ENCODE measurements at regions of chr2 and their contacts with region 1.

Region 1: GRCh38 chr2:121530212-121530705 is 421 bp upstream of the RNU4ATAC start:
- DNase-seq: peak; percentile 75 to 87
- H3K4me3 ChIP-seq: peak overlapping the region; percentile 66 to 74
- H3K27ac ChIP-seq: peak overlapping the region; percentile 85 to 98
- H3K4me1 ChIP-seq: peaks cover 0 to 67% (median 37%) of the 10 kb centered on the region in 4 donors
- H3K27me3 ChIP-seq: no peaks in the 10 kb centered on the region
- CTCF ChIP-seq: no peak

Region 2: GRCh38 chr2:121649596-121650314 is 119.5 kb after region 1 on chr2:
- intact Hi-C with region 1: loop called (anchors 2 kb)
- DNase-seq: peak; percentile 96 to 98
- H3K4me3 ChIP-seq: peak overlapping the region; percentile 98
- H3K27ac ChIP-seq: peak overlapping the region; percentile 97
- H3K4me1 ChIP-seq: peaks cover 0 to 51% (median 36%) of the 10 kb centered on the region in 4 donors
- H3K27me3 ChIP-seq: no peaks in the 10 kb centered on the region
- CTCF ChIP-seq: no peak

Region 3: DNA sequence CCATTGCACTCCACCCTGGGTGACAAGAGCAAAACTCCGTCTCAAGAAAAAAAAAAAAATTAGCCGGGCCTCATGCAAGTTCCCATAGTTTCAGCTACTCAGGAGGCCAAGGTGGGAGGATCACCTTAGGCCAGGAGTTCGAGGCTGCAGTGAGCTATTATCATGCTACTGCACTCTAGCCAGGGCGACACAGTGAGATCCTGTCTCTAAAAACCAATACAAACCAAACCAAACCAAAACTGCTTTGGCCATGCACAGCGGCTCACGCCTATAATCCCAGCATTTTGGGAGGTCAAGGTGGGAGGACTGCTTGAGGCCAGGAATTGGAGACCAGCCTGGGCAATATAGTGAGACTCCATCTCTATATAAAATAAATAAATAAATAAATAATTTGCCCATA is 187.3 kb after region 1 on chr2:
- intact Hi-C with region 1: loop called (anchors 5 kb)
- DNase-seq: peak in 1 of 2 donors; percentile 31
- H3K4me3 ChIP-seq: no peak overlapping the region
- H3K27ac ChIP-seq: no peak overlapping the region
- H3K4me1 ChIP-seq: peaks cover 0 to 12% (median 2%) of the 10 kb centered on the region in 4 donors
- H3K27me3 ChIP-seq: no peaks in the 10 kb centered on the region
- CTCF ChIP-seq: no peak

Region 4: GRCh38 chr2:121736462-121737341 is 206.4 kb after region 1 on chr2 and contains the start of gene NIFK:
- intact Hi-C with region 1: loop called (anchors 5 kb)
- DNase-seq: peak; percentile 98 to 100
- H3K4me3 ChIP-seq: peak within 1 kb of the TSS; percentile 78 to 98
- H3K27ac ChIP-seq: peak within 1 kb of the TSS; percentile 82 to 83
- H3K4me1 ChIP-seq: peaks cover 0 to 12% (median 8%) of the 10 kb centered on the region in 4 donors
- H3K27me3 ChIP-seq: no peaks in the 10 kb centered on the region
- CTCF ChIP-seq: no peak